HepG2 (cell line): ENCODE measurements at regions of chr19 and their contacts with region 1.

Region 1: GRCh38 chr19:29528350-29528945 is 2.7 kb downstream of the VSTM2B start:
- DNase-seq: peak; percentile 49
- ATAC-seq: peak; percentile 93
- H3K4me3 ChIP-seq: peak overlapping the region; percentile 22 to 54 (median 41); a peak in 5 of 6 replicates
- H3K27ac ChIP-seq: no peak overlapping the region
- H3K4me1 ChIP-seq: peaks cover 10% of the 10 kb centered on the region
- H3K27me3 ChIP-seq: peaks cover 4 to 18% of the 10 kb centered on the region in 2 experiments; a peak in 4 of 5 replicates
- CTCF ChIP-seq: peak; percentile 89
- EP300 ChIP-seq: no peak
- POLR2A ChIP-seq: no peak
- RAD21 ChIP-seq: peak; percentile 77

Region 2: DNA sequence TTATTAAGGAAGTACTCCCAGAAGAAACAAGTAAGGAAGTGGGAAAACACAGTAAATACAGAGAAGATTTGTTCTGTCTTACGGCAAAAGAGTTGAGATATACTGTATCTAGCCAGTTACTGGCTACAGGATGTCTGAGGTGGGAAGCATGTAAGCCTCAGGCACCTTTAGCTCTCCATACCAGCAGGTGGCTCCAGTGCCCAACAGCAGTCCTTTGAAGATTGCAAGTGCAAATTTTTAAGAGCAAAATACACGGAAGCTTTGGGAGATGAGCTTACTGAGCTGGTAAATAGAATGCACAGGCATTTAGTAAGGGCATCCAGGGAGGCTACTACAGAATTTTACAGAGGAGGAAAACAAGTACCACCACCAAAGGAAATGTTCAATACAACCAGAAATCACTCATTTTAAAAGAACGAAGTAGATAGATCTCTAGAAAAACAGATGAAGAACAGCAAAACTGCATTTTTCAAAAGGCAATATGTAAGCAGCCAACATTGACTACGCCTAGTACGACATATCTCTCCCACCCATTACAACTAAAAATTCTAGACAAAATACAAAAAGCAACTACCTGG is 60.5 kb before region 1 on chr19:
- CTCF ChIA-PET with region 1: interaction called, 8 read pairs
- POLR2A ChIA-PET with region 1: no interaction called
- in situ Hi-C with region 1: no loop called
- intact Hi-C with region 1: loop called (anchors 5 kb)
- DNase-seq: peak; percentile 50
- ATAC-seq: peak; percentile 89
- H3K4me3 ChIP-seq: no peak overlapping the region
- H3K27ac ChIP-seq: no peak overlapping the region
- H3K4me1 ChIP-seq: no peaks in the 10 kb centered on the region
- H3K27me3 ChIP-seq: no peaks in the 10 kb centered on the region
- CTCF ChIP-seq: peak; percentile 75
- EP300 ChIP-seq: no peak
- POLR2A ChIP-seq: no peak
- RAD21 ChIP-seq: peak; percentile 31; the same call in 1 of the 2 replicates

Region 3: GRCh38 chr19:29539670-29540069 is 11.2 kb after region 1 on chr19:
- CTCF ChIA-PET with region 1: no interaction called
- POLR2A ChIA-PET with region 1: no interaction called
- in situ Hi-C with region 1: no loop called
- intact Hi-C with region 1: no loop called
- DNase-seq: no peak
- ATAC-seq: no peak
- H3K4me3 ChIP-seq: no peak overlapping the region
- H3K27ac ChIP-seq: no peak overlapping the region
- H3K4me1 ChIP-seq: no peaks in the 10 kb centered on the region
- H3K27me3 ChIP-seq: no peaks in the 10 kb centered on the region
- CTCF ChIP-seq: no peak
- EP300 ChIP-seq: no peak
- POLR2A ChIP-seq: no peak
- RAD21 ChIP-seq: no peak